B cell (primary cell): ENCODE measurements at regions of chr7 and their contacts with region 1.

Region 1: GRCh38 chr7:101363734-101364374 is 1.2 kb downstream of the COL26A1 start:
- DNase-seq: peak; percentile 84
- ATAC-seq: peak; percentile 94
- H3K4me3 ChIP-seq: peak overlapping the region in 4 of 5 experiments; percentile 42 to 74 (median 50)
- H3K4me3 Mint-ChIP-seq: peak overlapping the region; percentile 68
- H3K27ac ChIP-seq: no peak overlapping the region
- H3K27ac Mint-ChIP-seq: no peak overlapping the region
- H3K4me1 ChIP-seq: peaks cover 10 to 21% of the 10 kb centered on the region in 2 donors
- H3K4me1 Mint-ChIP-seq: peaks cover 12% of the 10 kb centered on the region
- H3K27me3 ChIP-seq: peaks cover 0 to 29% (median 11%) of the 10 kb centered on the region in 4 experiments
- H3K27me3 Mint-ChIP-seq: peaks cover 32% of the 10 kb centered on the region
- CTCF ChIP-seq: peak; percentile 95

Region 2: GRCh38 chr7:101265622-101266516 is 98.0 kb before region 1 on chr7:
- CTCF ChIA-PET with region 1: no interaction called
- POLR2A ChIA-PET with region 1: no interaction called
- intact Hi-C with region 1: no loop called
- DNase-seq: no peak
- ATAC-seq: no peak
- H3K4me3 ChIP-seq: no peak overlapping the region
- H3K4me3 Mint-ChIP-seq: no peak overlapping the region
- H3K27ac ChIP-seq: no peak overlapping the region
- H3K27ac Mint-ChIP-seq: no peak overlapping the region
- H3K4me1 ChIP-seq: no peaks in the 10 kb centered on the region
- H3K4me1 Mint-ChIP-seq: peaks cover 2% of the 10 kb centered on the region
- H3K27me3 ChIP-seq: peaks cover 0 to 4% (median 2%) of the 10 kb centered on the region in 4 experiments
- H3K27me3 Mint-ChIP-seq: peaks cover 19% of the 10 kb centered on the region
- CTCF ChIP-seq: no peak

Region 3: DNA sequence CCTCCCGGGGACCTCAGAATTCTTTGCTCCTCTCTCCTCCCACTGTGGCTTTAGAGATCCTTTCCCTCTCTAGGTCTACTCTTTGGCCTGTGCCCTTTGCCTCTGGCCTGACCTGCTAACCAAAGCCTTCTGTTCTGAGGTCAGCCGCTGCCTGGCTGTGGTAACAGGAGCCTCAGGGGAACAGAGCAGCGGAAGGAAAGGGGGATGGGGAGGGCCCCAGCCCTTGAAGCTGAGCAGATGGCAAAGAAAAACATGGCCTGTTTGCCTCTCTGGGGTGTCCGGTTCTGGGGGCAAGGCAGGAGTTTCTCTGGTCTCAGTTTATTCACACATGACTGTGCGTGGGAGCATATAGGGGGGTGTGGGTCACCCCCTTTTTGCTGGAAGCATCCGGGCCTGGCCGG is 27.0 kb after region 1 on chr7:
- CTCF ChIA-PET with region 1: interaction called, 19 read pairs
- POLR2A ChIA-PET with region 1: interaction called, 3 read pairs
- intact Hi-C with region 1: loop called (anchors 2 kb)
- DNase-seq: peak; percentile 67
- ATAC-seq: peak; percentile 98
- H3K4me3 ChIP-seq: peak overlapping the region in 3 of 5 experiments; percentile 6 to 35 (median 10)
- H3K4me3 Mint-ChIP-seq: peak overlapping the region; percentile 80
- H3K27ac ChIP-seq: peak overlapping the region; percentile 55 to 57
- H3K27ac Mint-ChIP-seq: peak overlapping the region; percentile 86
- H3K4me1 ChIP-seq: peaks cover 42 to 45% of the 10 kb centered on the region in 2 donors
- H3K4me1 Mint-ChIP-seq: peaks cover 39% of the 10 kb centered on the region
- H3K27me3 ChIP-seq: peaks cover 0 to 10% (median 1%) of the 10 kb centered on the region in 4 experiments
- H3K27me3 Mint-ChIP-seq: peaks cover 4% of the 10 kb centered on the region
- CTCF ChIP-seq: no peak

Region 4: DNA sequence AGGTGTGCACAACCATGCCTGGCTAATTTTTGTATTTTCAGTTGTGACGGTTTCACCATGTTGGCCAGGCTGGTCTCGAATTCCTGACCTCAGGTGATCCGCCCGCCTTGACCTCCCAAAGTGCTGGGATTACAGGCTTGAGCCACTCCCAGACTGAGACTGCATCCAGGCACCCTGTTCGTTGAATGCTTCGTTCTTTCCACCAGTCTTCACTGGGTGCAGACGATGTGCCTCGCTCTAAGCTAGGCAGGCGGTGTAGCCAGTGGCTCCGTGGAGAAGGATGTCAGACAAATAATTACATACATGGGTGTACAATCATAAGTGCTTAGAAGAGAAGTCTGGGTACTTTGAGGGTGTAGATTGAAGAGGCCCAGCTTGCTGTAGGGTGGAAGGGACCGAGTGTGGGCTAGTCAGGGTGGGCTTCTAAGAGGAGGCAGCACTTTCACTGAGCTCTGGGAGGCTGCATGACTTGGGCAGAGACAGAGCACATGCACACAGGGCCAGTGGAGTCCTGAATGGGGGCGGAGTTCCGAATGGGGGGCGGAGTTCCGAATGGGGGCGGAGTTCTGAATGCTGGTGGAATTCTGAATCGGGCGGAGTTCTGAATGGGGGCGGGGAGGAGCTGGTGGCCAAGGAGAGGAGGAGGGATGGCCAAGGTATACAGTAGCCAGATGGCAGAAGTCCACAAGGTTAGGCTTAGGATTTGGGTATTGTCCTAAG is 73.2 kb after region 1 on chr7:
- CTCF ChIA-PET with region 1: interaction called, 83 read pairs
- POLR2A ChIA-PET with region 1: no interaction called
- intact Hi-C with region 1: no loop called
- DNase-seq: no peak
- ATAC-seq: no peak
- H3K4me3 ChIP-seq: no peak overlapping the region
- H3K4me3 Mint-ChIP-seq: no peak overlapping the region
- H3K27ac ChIP-seq: no peak overlapping the region
- H3K27ac Mint-ChIP-seq: no peak overlapping the region
- H3K4me1 ChIP-seq: no peaks in the 10 kb centered on the region
- H3K4me1 Mint-ChIP-seq: no peaks in the 10 kb centered on the region
- H3K27me3 ChIP-seq: peaks cover 0 to 45% (median 2%) of the 10 kb centered on the region in 4 experiments
- H3K27me3 Mint-ChIP-seq: peaks cover 34% of the 10 kb centered on the region
- CTCF ChIP-seq: no peak

Region 5: GRCh38 chr7:101486433-101487104 is 122.7 kb after region 1 on chr7:
- CTCF ChIA-PET with region 1: no interaction called
- POLR2A ChIA-PET with region 1: no interaction called
- intact Hi-C with region 1: no loop called
- DNase-seq: no peak
- ATAC-seq: no peak
- H3K4me3 ChIP-seq: no peak overlapping the region
- H3K4me3 Mint-ChIP-seq: no peak overlapping the region
- H3K27ac ChIP-seq: no peak overlapping the region
- H3K27ac Mint-ChIP-seq: no peak overlapping the region
- H3K4me1 ChIP-seq: no peaks in the 10 kb centered on the region
- H3K4me1 Mint-ChIP-seq: no peaks in the 10 kb centered on the region
- H3K27me3 ChIP-seq: peaks cover 0 to 3% (median 0%) of the 10 kb centered on the region in 4 experiments
- H3K27me3 Mint-ChIP-seq: peaks cover 27% of the 10 kb centered on the region
- CTCF ChIP-seq: no peak

Region 6: DNA sequence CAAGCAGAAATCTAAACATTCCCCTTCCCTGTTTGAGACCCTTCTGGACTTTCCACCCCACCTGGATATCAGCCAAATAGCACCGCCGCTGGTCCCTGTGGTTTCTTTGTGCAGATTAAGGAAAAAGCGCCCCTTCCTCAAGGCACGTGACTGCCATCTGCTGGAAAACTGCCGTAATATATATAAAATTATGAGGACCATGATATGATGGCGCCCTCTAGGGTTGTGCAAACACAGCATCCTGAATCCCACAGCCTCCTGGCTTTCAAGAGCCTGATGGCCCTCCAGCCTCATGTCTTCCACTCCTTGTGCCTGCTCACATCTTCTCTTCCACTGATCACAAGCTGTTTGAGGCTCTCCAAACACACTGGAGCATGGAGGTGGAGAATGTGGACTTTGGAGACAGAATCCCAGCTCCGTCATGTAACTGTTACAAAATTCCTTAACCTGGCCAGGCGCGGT is 144.0 kb after region 1 on chr7:
- CTCF ChIA-PET with region 1: interaction called, 28 read pairs
- POLR2A ChIA-PET with region 1: no interaction called
- intact Hi-C with region 1: loop called (anchors 1 kb)
- DNase-seq: peak; percentile 64
- ATAC-seq: peak; percentile 48
- H3K4me3 ChIP-seq: peak overlapping the region in 3 of 5 experiments; percentile 10 to 33 (median 18)
- H3K4me3 Mint-ChIP-seq: peak overlapping the region; percentile 18
- H3K27ac ChIP-seq: no peak overlapping the region
- H3K27ac Mint-ChIP-seq: no peak overlapping the region
- H3K4me1 ChIP-seq: peaks cover 30 to 35% of the 10 kb centered on the region in 2 donors
- H3K4me1 Mint-ChIP-seq: peaks cover 42% of the 10 kb centered on the region
- H3K27me3 ChIP-seq: peaks cover 0 to 17% (median 2%) of the 10 kb centered on the region in 4 experiments
- H3K27me3 Mint-ChIP-seq: peaks cover 5% of the 10 kb centered on the region
- CTCF ChIP-seq: peak; percentile 78